ENCODE measurements at regions of chr1 and their contacts with region 1.

Region 1: GRCh38 chr1:246632281-246633087 is 66.2 kb downstream of the CNST start:
- DNase-seq: peak; percentile 88
- ATAC-seq: peak; percentile 67
- H3K4me3 ChIP-seq: peak overlapping the region; percentile 37; the same call in 1 of the 2 replicates
- H3K27ac ChIP-seq: peak overlapping the region; percentile 97
- H3K4me1 ChIP-seq: peaks cover 18% of the 10 kb centered on the region
- H3K27me3 ChIP-seq: no peaks in the 10 kb centered on the region
- CTCF ChIP-seq: no peak
- POLR2A ChIP-seq: no peak
- RAD21 ChIP-seq: no peak

Region 2: DNA sequence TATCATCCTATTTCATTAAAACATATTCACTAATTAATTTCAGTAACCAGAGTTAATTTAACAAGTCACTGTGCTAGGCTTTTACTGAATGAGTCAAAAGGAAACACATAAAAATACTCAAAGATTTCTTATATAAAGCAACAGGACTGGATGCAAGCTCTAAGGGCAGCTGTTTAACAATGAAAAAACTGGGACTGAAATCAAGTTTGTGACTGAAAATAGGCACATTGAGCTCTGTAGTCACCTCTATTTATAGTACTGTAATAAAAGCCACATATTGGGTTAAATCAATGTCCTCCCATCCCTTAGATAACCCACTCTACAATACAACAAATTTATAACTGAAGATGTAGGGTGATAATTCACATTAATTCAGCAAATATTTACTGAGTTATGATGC is 177.8 kb before region 1 on chr1:
- CTCF ChIA-PET with region 1: no interaction called
- POLR2A ChIA-PET with region 1: no interaction called
- dilution Hi-C with region 1: no loop called
- in situ Hi-C with region 1: no loop called
- intact Hi-C with region 1: no loop called
- DNase-seq: no peak
- ATAC-seq: no peak
- H3K4me3 ChIP-seq: no peak overlapping the region
- H3K27ac ChIP-seq: no peak overlapping the region
- H3K4me1 ChIP-seq: peaks cover 2% of the 10 kb centered on the region
- H3K27me3 ChIP-seq: no peaks in the 10 kb centered on the region
- CTCF ChIP-seq: no peak
- POLR2A ChIP-seq: no peak
- RAD21 ChIP-seq: no peak

Region 3: DNA sequence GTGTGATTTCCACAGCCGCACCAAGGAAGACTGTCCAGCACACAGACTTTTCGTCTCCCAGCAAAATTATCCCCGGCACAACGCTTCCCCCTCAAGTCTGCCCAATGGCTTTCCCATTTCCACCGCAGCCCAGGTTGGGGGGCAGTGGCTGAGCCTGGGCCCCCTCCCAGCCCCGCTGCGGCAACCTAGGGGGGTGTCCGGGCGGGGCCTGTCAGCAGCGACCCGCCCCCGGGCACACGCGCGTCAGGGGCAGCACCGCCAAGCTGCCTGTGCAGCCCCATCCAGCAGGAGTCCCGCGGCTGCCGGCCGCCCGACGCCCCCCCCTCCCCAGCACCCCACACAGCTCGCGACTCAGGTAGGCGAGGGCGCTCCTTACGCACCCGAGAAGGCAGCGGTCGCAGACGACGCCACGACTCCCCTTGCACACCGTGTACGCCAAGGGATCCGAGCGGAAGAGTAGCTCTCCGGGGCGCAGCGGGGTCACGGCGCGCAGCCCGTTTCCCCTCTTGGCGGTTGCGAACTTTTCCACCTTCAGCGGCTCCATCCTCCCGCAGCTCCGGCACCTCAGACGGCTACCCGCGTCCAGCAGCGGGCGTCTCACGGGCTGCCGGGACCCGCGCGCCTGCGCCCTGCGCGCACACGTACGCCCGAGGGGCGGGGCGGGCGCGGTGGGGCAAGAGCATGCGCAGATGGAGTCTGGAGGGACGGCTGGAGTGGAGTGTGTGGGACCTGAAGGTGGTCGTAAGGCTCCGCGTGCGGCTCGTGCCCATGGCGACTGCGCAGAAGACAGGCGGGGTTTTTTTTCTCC is 125.6 kb before region 1 on chr1 and contains the start of gene SMYD3:
- CTCF ChIA-PET with region 1: no interaction called
- POLR2A ChIA-PET with region 1: no interaction called
- dilution Hi-C with region 1: no loop called
- in situ Hi-C with region 1: no loop called
- intact Hi-C with region 1: loop called (anchors 5 kb)
- DNase-seq: peak; percentile 66
- ATAC-seq: peak; percentile 97
- H3K4me3 ChIP-seq: peak within 1 kb of the TSS; percentile 98
- H3K27ac ChIP-seq: peak within 1 kb of the TSS; percentile 65
- H3K4me1 ChIP-seq: peaks cover 6% of the 10 kb centered on the region
- H3K27me3 ChIP-seq: no peaks in the 10 kb centered on the region
- CTCF ChIP-seq: peak; percentile 21; the same call in 1 of the 2 replicates
- POLR2A ChIP-seq: no peak
- RAD21 ChIP-seq: no peak
- total RNA-seq, gene SMYD3: 32.5 and 37.6 TPM in 2 replicates

Region 4: GRCh38 chr1:246537887-246538286 is 94.6 kb before region 1 on chr1:
- CTCF ChIA-PET with region 1: no interaction called
- POLR2A ChIA-PET with region 1: no interaction called
- dilution Hi-C with region 1: no loop called
- in situ Hi-C with region 1: no loop called
- intact Hi-C with region 1: no loop called
- DNase-seq: no peak
- ATAC-seq: no peak
- H3K4me3 ChIP-seq: no peak overlapping the region
- H3K27ac ChIP-seq: no peak overlapping the region
- H3K4me1 ChIP-seq: no peaks in the 10 kb centered on the region
- H3K27me3 ChIP-seq: peaks cover 9% of the 10 kb centered on the region
- CTCF ChIP-seq: no peak
- POLR2A ChIP-seq: no peak
- RAD21 ChIP-seq: no peak

Region 5: DNA sequence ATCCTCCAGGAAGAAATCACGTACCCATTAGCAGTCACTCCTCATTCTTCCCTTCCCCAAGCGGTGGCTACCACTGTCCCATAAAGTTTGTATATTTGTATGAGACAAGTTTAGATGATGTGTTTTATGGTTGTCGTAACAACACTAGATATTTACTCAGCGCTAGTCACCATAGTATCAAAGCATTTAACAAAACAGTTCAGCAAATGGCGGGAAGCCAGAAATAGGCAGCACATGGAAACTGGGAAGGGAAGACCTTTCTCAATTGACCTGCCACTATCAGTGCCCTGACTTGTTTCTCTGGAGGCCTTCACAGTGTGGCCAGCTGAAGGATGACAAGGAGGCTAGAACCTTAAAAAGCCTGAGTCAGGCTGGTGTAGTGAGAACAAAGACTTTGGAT is 35.1 kb before region 1 on chr1:
- CTCF ChIA-PET with region 1: interaction called, 3 read pairs
- POLR2A ChIA-PET with region 1: no interaction called
- dilution Hi-C with region 1: no loop called
- in situ Hi-C with region 1: no loop called
- intact Hi-C with region 1: loop called (anchors 5 kb)
- DNase-seq: peak; percentile 94
- ATAC-seq: peak; percentile 63
- H3K4me3 ChIP-seq: no peak overlapping the region
- H3K27ac ChIP-seq: no peak overlapping the region
- H3K4me1 ChIP-seq: peaks cover 11% of the 10 kb centered on the region
- H3K27me3 ChIP-seq: no peaks in the 10 kb centered on the region
- CTCF ChIP-seq: no peak
- POLR2A ChIP-seq: peak; percentile 45; the same call in 1 of the 2 replicates
- RAD21 ChIP-seq: 0 out of 2 replicates have a peak, but pooled peaks have one; percentile 2